ENCODE measurements at regions of chr9 and their contacts with region 1.

Region 1: DNA sequence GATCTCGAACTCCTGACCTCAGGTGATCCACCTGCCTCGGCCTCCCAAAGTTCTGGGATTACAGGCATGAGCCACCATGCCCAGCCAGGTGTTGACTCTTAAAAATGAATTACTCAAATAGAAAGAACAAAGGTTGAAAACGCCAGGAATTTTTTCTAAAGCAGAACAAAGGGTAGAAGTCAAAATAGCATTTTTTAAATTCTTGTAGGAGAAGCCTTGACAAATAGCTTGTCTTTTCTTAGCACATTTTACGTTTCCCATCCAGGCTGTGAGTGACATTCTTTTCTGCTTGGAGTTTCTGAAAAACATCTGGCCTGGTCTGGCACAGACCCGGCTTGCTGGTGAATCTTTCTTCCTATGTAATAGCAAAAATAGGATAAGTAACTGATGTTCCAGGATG is 169.4 kb upstream of the ZNF462 start:
- DNase-seq: peak; percentile 55 to 60
- H3K4me3 ChIP-seq: no peak overlapping the region
- H3K4me3 Mint-ChIP-seq: no peak overlapping the region
- H3K27ac Mint-ChIP-seq: peak overlapping the region; percentile 91
- H3K4me1 ChIP-seq: peaks cover 13% of the 10 kb centered on the region
- H3K4me1 Mint-ChIP-seq: peaks cover 20% of the 10 kb centered on the region
- H3K27me3 ChIP-seq: no peaks in the 10 kb centered on the region
- H3K27me3 Mint-ChIP-seq: no peaks in the 10 kb centered on the region
- CTCF ChIP-seq: no peak

Region 2: DNA sequence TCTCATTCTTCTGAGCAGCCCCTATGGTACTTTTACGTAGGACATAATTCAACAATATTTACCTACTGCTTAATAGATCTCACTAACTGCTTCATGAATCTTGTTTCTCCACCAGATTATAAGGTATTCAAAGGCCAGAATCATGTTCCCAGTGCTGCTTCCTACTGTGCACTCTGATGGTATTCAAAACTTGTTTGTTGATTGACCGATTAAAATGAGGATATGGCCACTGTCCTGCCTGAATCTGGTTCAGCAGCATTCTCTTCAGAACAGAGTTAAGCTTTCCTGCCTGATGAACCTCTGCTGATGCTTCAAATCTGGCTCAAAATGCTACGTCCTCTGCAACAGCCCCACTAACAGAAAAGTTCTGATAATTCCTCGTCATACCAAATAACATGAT is 18.7 kb after region 1 on chr9:
- CTCF ChIA-PET with region 1: no interaction called
- POLR2A ChIA-PET with region 1: no interaction called
- intact Hi-C with region 1: loop called (anchors 2 kb)
- DNase-seq: no peak
- H3K4me3 ChIP-seq: no peak overlapping the region
- H3K4me3 Mint-ChIP-seq: no peak overlapping the region
- H3K27ac Mint-ChIP-seq: no peak overlapping the region
- H3K4me1 ChIP-seq: peaks cover under 1% of the 10 kb centered on the region; the same call in 1 of the 2 replicates
- H3K4me1 Mint-ChIP-seq: no peaks in the 10 kb centered on the region
- H3K27me3 ChIP-seq: no peaks in the 10 kb centered on the region
- H3K27me3 Mint-ChIP-seq: no peaks in the 10 kb centered on the region
- CTCF ChIP-seq: no peak

Region 3: GRCh38 chr9:106731910-106732309 is 38.4 kb after region 1 on chr9:
- CTCF ChIA-PET with region 1: no interaction called
- POLR2A ChIA-PET with region 1: no interaction called
- intact Hi-C with region 1: no loop called
- DNase-seq: no peak
- H3K4me3 ChIP-seq: no peak overlapping the region
- H3K4me3 Mint-ChIP-seq: no peak overlapping the region
- H3K27ac Mint-ChIP-seq: no peak overlapping the region
- H3K4me1 ChIP-seq: no peaks in the 10 kb centered on the region
- H3K4me1 Mint-ChIP-seq: peaks cover 6% of the 10 kb centered on the region
- H3K27me3 ChIP-seq: no peaks in the 10 kb centered on the region
- H3K27me3 Mint-ChIP-seq: no peaks in the 10 kb centered on the region
- CTCF ChIP-seq: no peak

Region 4: GRCh38 chr9:106799146-106799545 is 105.6 kb after region 1 on chr9:
- CTCF ChIA-PET with region 1: interaction called, 5 read pairs
- POLR2A ChIA-PET with region 1: no interaction called
- intact Hi-C with region 1: loop called (anchors 1 kb)
- DNase-seq: peak in 1 of 2 experiments; percentile 29
- H3K4me3 ChIP-seq: no peak overlapping the region
- H3K4me3 Mint-ChIP-seq: peak overlapping the region; percentile 32
- H3K27ac Mint-ChIP-seq: peak overlapping the region; percentile 27
- H3K4me1 ChIP-seq: peaks cover 22% of the 10 kb centered on the region
- H3K4me1 Mint-ChIP-seq: peaks cover 24% of the 10 kb centered on the region
- H3K27me3 ChIP-seq: no peaks in the 10 kb centered on the region
- H3K27me3 Mint-ChIP-seq: no peaks in the 10 kb centered on the region
- CTCF ChIP-seq: no peak